Thyroid gland (tissue), 4 donors: ENCODE measurements at regions of chr20 and their contacts with region 1.

Region 1: GRCh38 chr20:44866703-44867335 is 18.7 kb upstream of the YWHAB start:
- DNase-seq: no peak
- H3K4me3 ChIP-seq: no peak overlapping the region
- H3K27ac ChIP-seq: no peak overlapping the region
- H3K4me1 ChIP-seq: peaks cover 19 to 25% of the 10 kb centered on the region in 2 donors
- H3K27me3 ChIP-seq: no peaks in the 10 kb centered on the region
- CTCF ChIP-seq: no peak
- POLR2A ChIP-seq: no peak

Region 2: GRCh38 chr20:44747166-44748004 is 119.4 kb before region 1 on chr20:
- intact Hi-C with region 1: loop called (anchors 5 kb)
- DNase-seq: peak; percentile 95
- H3K4me3 ChIP-seq: no peak overlapping the region
- H3K27ac ChIP-seq: peak overlapping the region; percentile 27 to 82 (median 74)
- H3K4me1 ChIP-seq: peaks cover 18 to 27% of the 10 kb centered on the region in 2 donors
- H3K27me3 ChIP-seq: no peaks in the 10 kb centered on the region
- CTCF ChIP-seq: peak in 5 of 6 experiments; percentile 55 to 83 (median 73)
- POLR2A ChIP-seq: no peak